ENCODE measurements at regions of chr15 and their contacts with region 1.

Region 1: DNA sequence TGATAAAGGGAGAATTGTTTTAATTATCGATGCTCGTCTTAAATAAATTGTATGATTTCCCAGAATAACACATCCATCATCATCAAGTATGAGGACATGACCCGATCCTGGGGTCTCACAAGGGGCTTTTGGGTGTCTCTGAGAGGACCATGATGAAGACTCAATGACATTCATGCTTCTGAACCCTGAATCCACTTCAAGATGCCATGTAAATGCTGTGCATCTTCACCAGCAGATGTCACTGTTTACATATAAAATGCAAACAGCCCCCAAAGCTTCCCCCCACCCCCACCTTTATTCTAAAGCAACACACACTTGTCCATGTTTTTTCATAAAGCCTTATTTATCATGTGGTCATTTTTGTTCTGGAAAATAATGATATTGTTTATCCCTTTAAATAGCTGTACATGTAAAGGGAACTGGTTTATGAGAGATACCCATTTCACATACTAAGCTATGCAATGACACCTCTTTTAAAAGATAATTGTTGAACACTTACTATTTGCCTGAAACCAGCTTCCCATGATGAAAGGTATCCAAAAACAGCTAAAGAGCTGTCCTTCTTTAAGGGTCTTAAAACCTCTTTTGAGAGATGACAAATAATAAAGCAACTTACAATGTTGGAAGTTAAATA is 69.7 kb upstream of the UBE3A start:
- DNase-seq: no peak
- H3K4me3 ChIP-seq: no peak overlapping the region
- H3K27ac ChIP-seq: no peak overlapping the region
- H3K4me1 ChIP-seq: no peaks in the 10 kb centered on the region
- H3K27me3 ChIP-seq: no peaks in the 10 kb centered on the region
- CTCF ChIP-seq: peak; percentile 40 to 79 (median 58)
- EP300 ChIP-seq: no peak
- POLR2A ChIP-seq: no peak

Region 2: GRCh38 chr15:25582886-25583285 is 74.4 kb after region 1 on chr15:
- intact Hi-C with region 1: no loop called
- DNase-seq: no peak
- H3K4me3 ChIP-seq: no peak overlapping the region
- H3K27ac ChIP-seq: no peak overlapping the region
- H3K4me1 ChIP-seq: no peaks in the 10 kb centered on the region
- H3K27me3 ChIP-seq: no peaks in the 10 kb centered on the region
- CTCF ChIP-seq: no peak
- EP300 ChIP-seq: no peak
- POLR2A ChIP-seq: no peak

Region 3: DNA sequence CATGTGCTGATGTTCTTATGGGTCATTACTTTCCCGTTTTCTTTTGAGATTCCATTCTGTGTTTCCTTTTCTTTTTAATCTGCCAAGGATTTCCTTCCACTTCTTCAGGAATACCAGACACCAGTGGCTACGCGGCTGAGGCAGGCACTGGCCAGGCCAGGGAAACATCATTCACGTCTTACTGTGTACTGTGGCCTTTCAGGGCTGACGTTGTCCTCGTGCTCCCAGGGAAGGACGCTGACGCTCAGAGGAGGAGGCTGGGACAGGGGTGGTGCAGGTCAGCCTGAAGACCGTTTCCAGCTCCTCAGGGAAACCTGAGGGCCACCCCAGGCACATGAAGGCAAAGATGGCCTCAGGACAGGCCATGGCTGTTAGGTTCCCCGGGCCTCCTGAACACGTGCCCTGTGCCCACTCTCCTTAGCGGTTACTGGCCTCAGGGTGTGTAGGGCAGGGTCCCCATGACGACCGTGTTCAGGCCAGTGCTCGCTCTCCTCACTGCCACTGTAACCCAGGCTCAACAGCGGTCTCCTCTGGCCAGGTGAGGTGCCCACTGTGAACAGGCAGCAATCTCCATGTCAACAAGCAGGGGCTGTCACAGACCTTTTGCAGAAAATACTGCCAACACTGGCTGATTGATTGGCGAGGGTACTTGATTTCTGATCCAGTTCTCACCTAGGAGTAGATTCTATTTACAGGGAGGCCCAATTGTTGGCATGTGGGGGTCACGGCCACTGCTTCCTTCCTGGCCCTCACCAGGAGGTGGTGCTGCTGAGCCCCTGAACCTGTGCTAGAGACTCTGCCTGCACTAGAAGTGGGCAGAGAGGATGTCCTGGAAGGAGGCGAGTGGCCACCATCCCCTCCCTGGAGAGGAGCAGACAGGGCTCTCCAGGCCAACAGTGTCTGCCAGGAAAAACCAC is 185.1 kb after region 1 on chr15:
- intact Hi-C with region 1: loop called (anchors 5 kb)
- DNase-seq: peak; percentile 65
- H3K4me3 ChIP-seq: no peak overlapping the region
- H3K27ac ChIP-seq: no peak overlapping the region
- H3K4me1 ChIP-seq: peaks cover 0 to 8% (median 4%) of the 10 kb centered on the region in 4 donors
- H3K27me3 ChIP-seq: no peaks in the 10 kb centered on the region
- CTCF ChIP-seq: peak in 3 of 4 experiments; percentile 44 to 65 (median 62)
- EP300 ChIP-seq: no peak
- POLR2A ChIP-seq: no peak

Region 4: DNA sequence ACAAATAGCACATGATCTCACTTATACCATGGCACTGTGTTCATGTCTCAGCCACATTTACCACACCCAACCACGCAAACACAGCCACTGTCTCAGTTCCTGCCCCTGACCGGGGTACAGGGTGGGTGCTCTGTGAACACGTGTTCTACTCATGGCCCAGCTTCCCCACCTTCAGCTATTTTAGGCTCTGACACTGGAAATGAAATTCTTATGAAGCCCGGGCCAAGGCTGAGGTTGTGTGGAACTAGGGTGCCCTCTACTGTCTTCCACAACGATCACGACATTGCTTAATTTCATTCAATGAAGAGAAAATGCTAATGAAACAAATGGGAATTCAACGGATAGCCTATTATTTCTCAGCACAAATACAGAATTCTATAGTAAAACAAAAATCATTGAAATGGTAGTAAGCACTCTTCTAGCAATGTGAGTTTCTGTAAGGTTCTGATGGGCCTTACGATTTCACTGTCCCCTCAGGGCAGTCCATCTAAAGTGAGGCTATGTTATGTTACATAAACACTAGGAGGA is 1356.2 kb after region 1 on chr15:
- intact Hi-C with region 1: loop called (anchors 10 kb)
- DNase-seq: no peak
- H3K4me3 ChIP-seq: no peak overlapping the region
- H3K27ac ChIP-seq: no peak overlapping the region
- H3K4me1 ChIP-seq: peaks cover 0 to 22% (median 13%) of the 10 kb centered on the region in 4 donors
- H3K27me3 ChIP-seq: peaks cover 17 to 45% (median 28%) of the 10 kb centered on the region in 3 donors
- CTCF ChIP-seq: peak in 2 of 4 experiments; percentile 15 to 37
- EP300 ChIP-seq: no peak
- POLR2A ChIP-seq: no peak

Measured in sigmoid colon (tissue), 7 donors.